ENCODE measurements at regions of chr5 and their contacts with region 1.

Region 1: DNA sequence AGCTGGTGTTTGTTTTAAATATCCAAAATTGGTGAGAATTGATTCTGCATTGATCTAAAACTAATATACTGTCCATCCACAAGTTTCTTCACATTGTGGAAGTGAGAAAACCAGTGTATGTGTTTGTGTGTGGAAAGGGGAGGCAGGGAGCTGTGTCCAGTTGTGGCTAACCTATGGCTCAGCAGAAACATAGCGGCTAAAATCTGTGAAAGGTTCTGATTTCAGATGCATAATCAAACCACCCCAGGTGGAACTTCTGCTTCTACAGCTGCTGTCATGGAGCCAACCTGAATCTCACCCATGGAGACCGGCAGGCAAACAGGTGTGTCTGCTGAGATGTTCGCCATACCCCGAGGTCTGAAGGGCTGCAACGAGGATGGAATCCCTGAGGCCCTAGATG is at the start of gene TAF11L14:
- DNase-seq: no peak
- H3K4me3 ChIP-seq: no peak within 1 kb of the TSS
- CTCF ChIP-seq: no peak
- POLR2A ChIP-seq: no peak
- total RNA-seq, gene TAF11L14: not detected

Region 2: DNA sequence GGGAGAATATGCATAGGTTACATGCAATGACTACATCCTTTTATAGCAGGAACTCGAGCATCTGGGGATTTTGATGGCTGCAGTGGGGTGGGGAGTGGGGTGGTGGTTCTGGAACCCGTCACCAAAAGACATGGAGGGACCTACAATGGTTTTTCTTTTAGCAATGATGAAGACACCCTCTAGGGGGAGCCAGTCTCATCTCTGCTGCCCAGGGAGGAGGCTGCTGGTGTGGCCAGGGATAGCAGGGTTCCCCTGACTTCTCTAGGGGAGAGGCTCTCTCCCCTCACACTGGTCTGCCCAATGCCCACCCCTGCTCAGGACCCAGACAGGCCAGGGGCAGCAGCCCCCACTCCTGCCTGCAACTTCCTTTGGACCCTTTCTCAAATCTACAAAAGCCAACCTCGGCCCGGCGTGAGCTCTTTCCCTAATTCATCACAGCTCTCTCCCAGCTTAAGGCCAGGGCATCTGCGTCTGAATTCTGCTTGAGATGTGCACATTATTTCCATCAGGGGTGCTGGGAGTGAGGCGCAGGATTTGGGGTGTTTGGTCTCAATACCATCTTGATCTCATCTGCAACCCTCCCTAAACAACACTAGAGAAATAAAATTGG is 943.8 kb before region 1 on chr5:
- intact Hi-C with region 1: no loop called
- DNase-seq: no peak
- H3K4me3 ChIP-seq: no peak overlapping the region
- CTCF ChIP-seq: no peak
- POLR2A ChIP-seq: no peak

Region 3: GRCh38 chr5:17665836-17666235 is 31.7 kb after region 1 on chr5:
- intact Hi-C with region 1: loop called (anchors 2 kb)
- DNase-seq: no peak
- H3K4me3 ChIP-seq: no peak overlapping the region
- CTCF ChIP-seq: no peak
- POLR2A ChIP-seq: no peak

Region 4: DNA sequence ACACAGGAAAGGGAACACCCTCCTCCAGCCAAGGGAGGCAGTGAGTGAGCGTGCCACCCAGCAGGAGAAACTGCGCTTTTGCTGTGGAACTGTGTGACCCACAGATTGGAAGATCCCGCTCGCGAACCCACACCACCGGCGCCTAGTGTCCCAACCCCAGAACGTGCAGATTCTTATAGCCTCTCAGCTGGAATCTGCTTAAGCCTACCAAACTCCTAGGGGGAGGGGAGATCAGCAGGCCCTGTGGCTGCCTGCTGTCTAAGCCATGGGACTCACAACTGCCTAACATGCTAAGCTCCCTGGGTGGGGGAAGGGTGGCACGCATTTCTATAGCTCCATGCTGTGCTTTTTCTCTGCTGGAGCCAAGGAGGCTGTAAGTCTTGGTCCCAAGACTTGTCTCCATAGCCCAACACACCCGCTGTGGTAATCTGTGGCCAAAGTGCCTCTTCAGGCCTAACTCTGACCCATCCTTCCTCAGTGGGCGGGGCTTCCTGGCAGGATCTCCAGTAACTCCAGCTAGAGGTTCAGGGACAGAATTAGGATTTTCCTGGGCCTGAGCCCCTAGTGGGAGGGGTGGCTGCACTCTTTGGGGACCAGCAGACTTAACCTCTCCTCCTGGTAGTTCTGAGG is 485.1 kb after region 1 on chr5:
- intact Hi-C with region 1: no loop called
- DNase-seq: peak in 1 of 2 donors; percentile 53
- H3K4me3 ChIP-seq: no peak overlapping the region
- CTCF ChIP-seq: no peak
- POLR2A ChIP-seq: no peak

Region 5: DNA sequence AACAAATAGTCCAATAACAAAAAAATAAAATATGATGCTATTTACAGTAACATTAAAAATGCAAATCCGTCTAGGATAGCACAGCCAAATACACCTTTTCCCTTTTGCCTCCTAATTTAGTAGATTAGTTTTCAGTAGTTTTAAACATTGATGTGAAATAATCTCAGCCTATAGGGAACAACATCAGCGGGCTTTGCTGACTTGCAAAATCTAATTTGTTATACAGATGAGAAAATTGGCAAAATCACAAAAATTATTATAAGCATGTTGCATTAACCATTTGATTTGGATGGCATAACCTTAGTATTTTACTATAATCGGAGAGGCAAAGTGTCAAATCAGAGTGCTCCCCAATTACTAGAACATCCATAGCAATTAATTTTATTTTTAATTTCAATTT is 1790.3 kb after region 1 on chr5:
- intact Hi-C with region 1: no loop called
- DNase-seq: no peak
- H3K4me3 ChIP-seq: no peak overlapping the region
- CTCF ChIP-seq: no peak
- POLR2A ChIP-seq: no peak